HEK293 (cell line): ENCODE measurements at regions of chr2 and their contacts with region 1.

Region 1: GRCh38 chr2:147910990-147911473 is 66.2 kb downstream of the ACVR2A start:
- H3K4me3 ChIP-seq: no peak overlapping the region
- H3K27ac ChIP-seq: no peak overlapping the region
- H3K4me1 ChIP-seq: peaks cover 16% of the 10 kb centered on the region
- CTCF ChIP-seq: peak; percentile 32; the same call in 1 of the 2 replicates

Region 2: GRCh38 chr2:146927080-146927711 is 983.8 kb before region 1 on chr2:
- CTCF ChIA-PET with region 1: interaction called, 17 read pairs
- POLR2A ChIA-PET with region 1: no interaction called
- H3K4me3 ChIP-seq: no peak overlapping the region
- H3K27ac ChIP-seq: no peak overlapping the region
- H3K4me1 ChIP-seq: no peaks in the 10 kb centered on the region
- CTCF ChIP-seq: peak; percentile 71